ENCODE measurements at regions of chr9 and their contacts with region 1.

Region 1: GRCh38 chr9:120531683-120532300 is 48.2 kb downstream of the CDK5RAP2 start:
- DNase-seq: peak; percentile 59
- H3K4me3 ChIP-seq: no peak overlapping the region
- H3K27ac ChIP-seq: peak overlapping the region; percentile 93
- H3K4me1 ChIP-seq: peaks cover 32% of the 10 kb centered on the region
- H3K27me3 ChIP-seq: no peaks in the 10 kb centered on the region
- CTCF ChIP-seq: peak; percentile 49 to 67

Region 2: DNA sequence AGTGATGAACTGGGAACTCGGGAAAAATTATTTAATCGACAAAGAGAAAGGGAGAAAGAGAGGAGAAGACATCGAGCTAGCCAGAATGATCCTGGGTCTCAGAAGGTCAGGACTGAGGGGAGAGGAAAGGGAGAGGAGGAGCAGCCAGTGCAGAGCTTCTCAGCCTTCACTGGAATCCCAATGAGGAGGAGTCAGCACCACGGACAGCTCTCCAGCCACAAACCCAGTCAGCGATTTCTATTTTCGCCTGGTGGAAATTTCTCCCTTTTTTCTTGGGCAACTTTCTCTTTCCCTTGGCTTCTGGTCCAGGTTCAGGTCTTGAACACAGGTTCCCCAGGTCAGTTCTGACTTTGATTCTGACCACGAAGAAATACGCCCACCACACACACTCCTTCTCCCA is 1161.0 kb before region 1 on chr9:
- CTCF ChIA-PET with region 1: interaction called, 28 read pairs
- dilution Hi-C with region 1: no loop called
- in situ Hi-C with region 1: no loop called
- intact Hi-C with region 1: loop called (anchors 2 kb)
- DNase-seq: peak; percentile 35
- H3K4me3 ChIP-seq: no peak overlapping the region
- H3K27ac ChIP-seq: no peak overlapping the region
- H3K4me1 ChIP-seq: peaks cover 8% of the 10 kb centered on the region
- H3K27me3 ChIP-seq: peaks cover 9% of the 10 kb centered on the region
- CTCF ChIP-seq: no peak

Region 3: GRCh38 chr9:119968836-119969707 is 562.7 kb before region 1 on chr9:
- CTCF ChIA-PET with region 1: no interaction called
- dilution Hi-C with region 1: no loop called
- in situ Hi-C with region 1: no loop called
- intact Hi-C with region 1: loop called (anchors 5 kb)
- DNase-seq: peak; percentile 45
- H3K4me3 ChIP-seq: no peak overlapping the region
- H3K27ac ChIP-seq: no peak overlapping the region
- H3K4me1 ChIP-seq: peaks cover 4% of the 10 kb centered on the region
- H3K27me3 ChIP-seq: peaks cover 2% of the 10 kb centered on the region
- CTCF ChIP-seq: peak; percentile 96 to 97

Region 4: DNA sequence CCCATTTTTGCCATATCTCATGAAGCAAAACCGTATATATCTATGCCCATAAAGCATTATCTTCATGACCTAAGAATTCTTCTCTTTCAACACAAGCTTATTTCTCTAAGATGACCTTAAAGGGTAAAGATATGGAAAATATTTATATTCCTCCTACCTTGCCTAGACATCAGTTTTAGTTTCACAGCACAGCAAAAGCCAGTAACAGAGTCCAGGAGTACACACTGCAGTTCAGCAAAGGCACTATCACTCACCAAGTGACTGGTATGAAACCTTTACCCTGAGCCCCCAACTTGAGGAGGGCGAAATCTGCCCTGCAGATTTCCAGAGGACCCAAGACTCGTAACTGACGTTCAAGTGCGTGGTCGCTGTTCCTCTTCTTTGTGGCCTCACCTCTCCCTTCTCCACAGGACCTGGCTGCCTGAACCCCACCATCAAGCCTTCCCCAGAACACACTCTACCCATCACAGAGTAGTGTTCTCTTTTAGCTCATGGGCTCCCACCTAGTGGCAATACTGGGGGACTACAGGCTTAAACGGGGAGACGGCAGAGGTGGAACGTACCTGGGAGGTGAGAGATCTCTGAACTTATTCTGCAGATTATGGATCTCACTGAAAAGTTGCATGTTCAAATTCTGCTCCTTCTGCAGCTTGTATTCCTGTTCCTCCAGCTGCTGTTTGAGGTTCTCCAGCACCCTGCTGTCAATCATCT is 92.8 kb before region 1 on chr9:
- CTCF ChIA-PET with region 1: no interaction called
- dilution Hi-C with region 1: no loop called
- in situ Hi-C with region 1: no loop called
- intact Hi-C with region 1: loop called (anchors 1 kb)
- DNase-seq: peak; percentile 9
- H3K4me3 ChIP-seq: no peak overlapping the region
- H3K27ac ChIP-seq: no peak overlapping the region
- H3K4me1 ChIP-seq: no peaks in the 10 kb centered on the region
- H3K27me3 ChIP-seq: no peaks in the 10 kb centered on the region
- CTCF ChIP-seq: peak; percentile 49 to 51

Region 5: GRCh38 chr9:120450916-120451315 is 80.9 kb before region 1 on chr9:
- CTCF ChIA-PET with region 1: no interaction called
- dilution Hi-C with region 1: no loop called
- in situ Hi-C with region 1: no loop called
- intact Hi-C with region 1: no loop called
- DNase-seq: no peak
- H3K4me3 ChIP-seq: no peak overlapping the region
- H3K27ac ChIP-seq: no peak overlapping the region
- H3K4me1 ChIP-seq: no peaks in the 10 kb centered on the region
- H3K27me3 ChIP-seq: no peaks in the 10 kb centered on the region
- CTCF ChIP-seq: no peak

Region 6: DNA sequence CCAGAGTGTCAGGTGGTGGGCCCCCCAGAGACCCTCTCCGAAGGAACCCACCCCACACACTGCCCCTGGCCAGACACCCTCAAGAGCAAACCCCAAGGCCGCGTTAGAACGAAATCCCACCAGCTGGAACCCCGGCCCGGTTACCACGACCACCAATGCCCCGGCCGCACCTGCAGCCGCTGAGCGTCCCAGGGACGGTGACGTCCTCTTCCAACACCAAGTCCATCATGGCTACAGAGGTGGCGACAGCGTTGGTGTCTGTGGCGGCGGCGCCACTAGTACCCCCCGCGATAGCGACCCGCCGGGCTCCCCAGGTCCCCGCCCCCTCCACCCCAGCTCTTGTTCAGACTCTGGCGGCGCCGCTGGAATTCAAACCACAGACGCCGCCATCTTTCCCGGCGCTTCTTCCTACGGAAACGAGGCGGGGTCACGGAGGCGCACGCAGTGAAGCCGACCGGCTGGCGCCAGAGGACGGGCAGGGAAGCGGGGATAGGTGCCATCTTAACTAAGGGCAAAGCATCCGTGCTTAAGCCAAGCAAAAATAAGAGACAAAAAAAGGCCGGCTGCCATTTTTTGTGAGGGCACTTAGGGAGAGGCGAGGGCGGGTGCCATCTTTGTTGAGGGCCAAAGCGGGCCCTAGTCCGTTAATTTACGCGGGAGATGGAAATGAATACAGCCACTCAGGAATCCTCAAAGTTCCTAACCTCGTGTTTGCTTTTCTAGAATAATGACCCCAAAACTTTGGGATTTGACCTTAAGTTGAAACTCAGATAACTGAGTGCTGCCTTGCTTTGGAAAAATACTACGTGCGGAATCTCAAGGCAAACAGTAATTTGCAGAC is 48.2 kb after region 1 on chr9 and contains the start of gene CDK5RAP2:
- CTCF ChIA-PET with region 1: no interaction called
- dilution Hi-C with region 1: loop called (anchors 5 kb)
- in situ Hi-C with region 1: no loop called
- intact Hi-C with region 1: no loop called
- DNase-seq: peak; percentile 94
- H3K4me3 ChIP-seq: peak within 1 kb of the TSS; percentile 91 to 96 (median 95)
- H3K27ac ChIP-seq: peak within 1 kb of the TSS; percentile 82
- H3K4me1 ChIP-seq: peaks cover 18% of the 10 kb centered on the region
- H3K27me3 ChIP-seq: no peaks in the 10 kb centered on the region
- CTCF ChIP-seq: no peak
- total RNA-seq, gene CDK5RAP2: 31.8 to 43.5 TPM

Region 7: DNA sequence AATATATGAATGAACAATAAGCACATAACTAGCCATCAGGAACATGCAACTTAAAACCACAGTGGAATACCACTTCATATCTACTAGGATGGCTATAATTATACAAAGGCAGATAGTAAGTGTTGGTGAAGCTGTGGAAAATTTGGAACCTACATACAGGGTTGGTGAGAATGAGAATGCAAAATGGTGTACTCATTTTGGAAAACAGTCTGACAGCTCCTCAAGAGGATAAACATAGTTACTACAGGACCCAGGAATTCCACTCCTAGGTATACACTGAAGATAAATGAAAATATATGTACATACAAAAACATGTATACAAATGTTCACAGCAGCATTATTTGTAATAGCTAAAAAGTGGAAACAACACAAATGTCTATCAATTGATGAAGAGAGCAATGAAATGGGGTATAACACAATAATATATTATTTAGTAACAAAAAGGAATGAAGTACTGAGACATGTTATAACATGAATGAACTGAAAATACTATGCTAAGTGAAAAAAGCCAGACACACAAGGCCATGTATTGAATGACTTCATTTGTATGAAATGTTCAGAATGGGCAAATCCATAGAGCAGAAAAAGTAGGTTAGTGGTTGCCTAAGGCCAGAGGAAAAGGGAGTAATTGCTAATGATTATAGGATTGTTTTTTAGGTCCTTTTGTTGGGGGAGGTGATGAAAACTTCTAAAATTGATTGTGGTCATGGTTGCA is 79.3 kb after region 1 on chr9:
- CTCF ChIA-PET with region 1: interaction called, 4 read pairs
- dilution Hi-C with region 1: no loop called
- in situ Hi-C with region 1: no loop called
- intact Hi-C with region 1: loop called (anchors 2 kb)
- DNase-seq: peak; percentile 83
- H3K4me3 ChIP-seq: no peak overlapping the region
- H3K27ac ChIP-seq: peak overlapping the region; percentile 74
- H3K4me1 ChIP-seq: peaks cover 52% of the 10 kb centered on the region
- H3K27me3 ChIP-seq: no peaks in the 10 kb centered on the region
- CTCF ChIP-seq: peak; percentile 43 to 45

Measured in mammary epithelial cell (primary cell).